ENCODE measurements at regions of chr9 and their contacts with region 1.

Region 1: DNA sequence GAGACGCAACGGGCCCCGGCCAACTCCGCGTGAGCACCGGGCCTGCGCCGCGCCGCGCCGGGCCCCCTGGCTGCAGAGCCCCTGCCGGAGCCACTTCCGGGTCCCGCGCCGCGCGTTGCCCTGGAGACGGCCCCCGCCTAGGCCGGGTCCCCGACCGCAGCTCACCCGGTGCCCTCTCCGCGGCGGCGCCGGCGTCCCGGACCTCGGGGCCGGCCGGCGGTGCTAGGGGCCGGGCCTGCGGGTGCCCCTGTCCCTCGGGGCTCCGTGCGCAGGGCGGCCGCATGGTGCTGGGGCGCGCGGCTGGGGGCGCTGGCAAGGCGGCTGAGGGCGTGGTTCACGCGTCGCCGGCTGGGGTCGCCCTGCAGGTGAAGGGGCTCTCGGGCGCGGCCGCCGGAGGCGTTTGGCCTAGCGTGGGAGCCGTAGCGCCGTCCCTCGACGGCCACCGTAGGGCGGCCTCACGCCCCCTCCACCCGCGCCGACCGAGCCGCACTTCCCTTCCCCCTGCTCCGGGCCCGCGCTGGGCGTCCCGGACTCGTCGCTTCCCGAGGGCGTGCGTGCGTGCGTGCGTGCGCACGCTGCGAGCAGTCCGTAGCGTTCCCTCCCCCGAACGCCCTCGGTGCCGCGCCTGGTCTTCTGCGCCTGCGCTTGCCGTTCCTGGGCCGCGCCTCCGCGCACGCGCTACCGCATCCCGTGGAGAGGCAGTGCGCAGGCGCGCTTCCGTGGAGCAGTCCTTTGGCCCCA is at the start of gene TMEM250:
- DNase-seq: peak; percentile 97
- H3K4me3 Mint-ChIP-seq: peak within 1 kb of the TSS; percentile 84
- H3K27ac Mint-ChIP-seq: peak within 1 kb of the TSS; percentile 87
- H3K4me1 Mint-ChIP-seq: peaks cover 30% of the 10 kb centered on the region
- H3K27me3 Mint-ChIP-seq: no peaks in the 10 kb centered on the region
- total RNA-seq, gene TMEM250: 28.0 to 28.4 TPM

Region 2: GRCh38 chr9:135961277-135961705 is 157.2 kb before region 1 on chr9 and contains the start of gene UBAC1:
- CTCF ChIA-PET with region 1: interaction called, 122 read pairs
- POLR2A ChIA-PET with region 1: interaction called, 3 read pairs
- intact Hi-C with region 1: loop called (anchors 2 kb)
- DNase-seq: peak; percentile 96
- H3K4me3 Mint-ChIP-seq: peak within 1 kb of the TSS; percentile 87
- H3K27ac Mint-ChIP-seq: peak within 1 kb of the TSS; percentile 66
- H3K4me1 Mint-ChIP-seq: peaks cover 35% of the 10 kb centered on the region
- H3K27me3 Mint-ChIP-seq: peaks cover 1% of the 10 kb centered on the region
- total RNA-seq, gene UBAC1: 41.3 to 42.0 TPM

Region 3: GRCh38 chr9:135971892-135972291 is 146.6 kb before region 1 on chr9:
- CTCF ChIA-PET with region 1: interaction called, 122 read pairs
- POLR2A ChIA-PET with region 1: no interaction called
- intact Hi-C with region 1: loop called (anchors 1 kb)
- DNase-seq: peak; percentile 60
- H3K4me3 Mint-ChIP-seq: no peak overlapping the region
- H3K27ac Mint-ChIP-seq: no peak overlapping the region
- H3K4me1 Mint-ChIP-seq: peaks cover 5% of the 10 kb centered on the region
- H3K27me3 Mint-ChIP-seq: peaks cover 2% of the 10 kb centered on the region

Region 4: DNA sequence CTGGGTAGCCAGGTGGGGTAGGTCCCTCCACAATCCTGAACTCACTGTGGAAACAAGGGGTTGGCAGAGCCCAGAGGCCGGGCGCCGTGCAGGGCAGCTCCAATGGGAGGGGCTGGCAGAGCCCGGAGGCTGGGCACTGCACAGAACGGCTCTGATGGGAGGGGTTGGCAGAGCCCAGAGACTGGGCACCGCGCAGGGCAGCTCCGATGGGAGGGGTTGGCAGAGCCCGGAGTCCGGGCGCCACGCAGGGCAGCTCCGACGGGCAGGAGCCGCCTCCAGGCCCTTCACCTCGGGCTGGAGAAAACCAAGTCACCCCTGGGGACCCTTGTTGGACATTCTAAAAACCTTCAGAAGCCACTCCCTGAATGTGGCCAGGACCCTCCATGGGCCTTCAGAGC is 32.7 kb before region 1 on chr9:
- CTCF ChIA-PET with region 1: interaction called, 58 read pairs
- POLR2A ChIA-PET with region 1: no interaction called
- intact Hi-C with region 1: loop called (anchors 1 kb)
- DNase-seq: no peak
- H3K4me3 Mint-ChIP-seq: no peak overlapping the region
- H3K27ac Mint-ChIP-seq: no peak overlapping the region
- H3K4me1 Mint-ChIP-seq: peaks cover 11% of the 10 kb centered on the region
- H3K27me3 Mint-ChIP-seq: no peaks in the 10 kb centered on the region

Region 5: DNA sequence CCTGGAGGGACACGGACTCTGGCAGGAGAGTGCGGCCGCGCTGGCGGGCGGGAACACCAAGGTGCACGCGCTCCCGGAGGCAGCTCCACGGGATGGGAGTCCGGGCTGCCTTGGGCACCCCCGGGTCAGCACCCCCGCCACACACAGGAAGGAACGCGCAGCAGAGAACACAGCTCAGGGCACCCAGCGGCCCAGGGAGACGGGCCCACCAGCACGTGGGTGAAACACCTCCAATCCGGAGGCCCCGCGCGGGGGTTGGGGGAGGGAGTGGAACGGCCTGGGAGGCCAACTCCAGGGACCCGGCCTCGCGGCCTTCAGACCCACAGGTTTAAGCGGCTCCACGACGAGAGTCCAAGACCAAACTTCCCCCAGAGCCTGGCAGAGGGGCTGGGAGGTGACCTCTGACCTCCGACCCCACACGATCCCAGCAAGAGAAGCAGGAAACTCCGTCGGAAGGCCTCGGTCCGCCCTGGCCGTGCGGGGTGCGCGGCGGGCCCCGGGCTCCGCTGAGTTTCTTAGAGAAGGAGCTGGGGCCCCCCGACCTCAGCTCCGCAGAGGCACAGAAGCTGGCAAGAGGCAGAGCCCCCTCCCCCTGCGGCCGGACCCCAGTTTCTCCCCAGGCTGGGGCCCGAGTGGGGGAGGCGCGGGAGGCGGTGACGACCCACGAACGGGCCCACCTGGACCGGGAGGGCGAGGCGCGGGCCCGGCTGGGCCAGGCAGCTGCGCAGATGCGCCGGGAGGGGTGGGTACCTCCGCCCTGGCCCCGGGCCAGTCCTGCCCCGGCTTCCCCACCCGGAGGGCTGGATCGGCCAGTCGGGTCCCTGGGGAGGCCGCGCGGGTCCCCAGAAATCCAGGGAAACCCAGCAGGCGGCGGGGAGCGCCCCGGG is 24.3 kb before region 1 on chr9:
- CTCF ChIA-PET with region 1: interaction called, 58 read pairs
- POLR2A ChIA-PET with region 1: interaction called, 10 read pairs
- intact Hi-C with region 1: loop called (anchors 1 kb)
- DNase-seq: peak; percentile 77
- H3K4me3 Mint-ChIP-seq: peak overlapping the region; percentile 76
- H3K27ac Mint-ChIP-seq: peak overlapping the region; percentile 45
- H3K4me1 Mint-ChIP-seq: peaks cover 24% of the 10 kb centered on the region
- H3K27me3 Mint-ChIP-seq: no peaks in the 10 kb centered on the region

Region 6: GRCh38 chr9:136545966-136546698 is 427.6 kb after region 1 on chr9 and contains the start of gene NOTCH1:
- CTCF ChIA-PET with region 1: no interaction called
- POLR2A ChIA-PET with region 1: no interaction called
- intact Hi-C with region 1: loop called (anchors 10 kb)
- DNase-seq: peak; percentile 93
- H3K4me3 Mint-ChIP-seq: peak within 1 kb of the TSS; percentile 96
- H3K27ac Mint-ChIP-seq: peak within 1 kb of the TSS; percentile 94
- H3K4me1 Mint-ChIP-seq: peaks cover 45% of the 10 kb centered on the region
- H3K27me3 Mint-ChIP-seq: no peaks in the 10 kb centered on the region
- total RNA-seq, gene NOTCH1: 67.0 to 68.3 TPM

Measured in activated CD4-positive, alpha-beta memory T cell treated with anti-CD3 and anti-CD28 coated beads for 36 hours (primary cell).